CD4-positive, alpha-beta T cell (primary cell): ENCODE measurements at regions of chr12 and their contacts with region 1.

Region 1: DNA sequence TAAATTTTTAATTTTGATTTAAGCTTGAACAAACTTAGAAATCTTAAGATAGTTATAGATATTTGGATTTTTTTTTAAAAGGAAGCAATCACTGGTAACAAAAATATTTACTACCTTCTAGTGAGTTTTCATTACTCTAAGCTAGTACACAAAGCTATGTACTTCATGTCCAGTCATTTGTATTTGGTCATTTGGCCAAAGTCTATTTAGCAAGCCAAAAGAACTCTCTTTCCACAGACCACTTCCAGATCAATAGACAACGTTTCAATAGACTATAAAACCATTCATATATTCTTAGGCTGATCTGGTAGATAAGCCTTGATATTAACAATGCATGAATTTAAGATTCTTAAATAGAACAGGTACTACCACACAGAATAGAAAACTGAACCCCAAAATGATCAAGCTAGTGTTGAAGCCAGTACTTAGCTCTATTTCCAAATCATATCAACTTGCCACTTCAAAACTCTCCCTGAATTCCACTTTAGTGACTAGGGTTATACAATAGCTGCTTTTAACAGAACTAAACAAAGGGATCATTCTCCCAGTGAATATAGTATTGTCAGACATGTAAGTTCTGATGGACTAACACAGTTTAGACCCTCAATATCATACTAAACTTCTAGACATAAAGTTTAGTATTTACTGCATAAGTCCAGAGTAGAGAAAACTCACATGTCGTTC is 21.7 kb downstream of the CAPRIN2 start:
- DNase-seq: no peak
- ATAC-seq: no peak
- H3K4me3 ChIP-seq: no peak overlapping the region
- H3K4me3 Mint-ChIP-seq: no peak overlapping the region
- H3K27ac ChIP-seq: no peak overlapping the region
- H3K27ac Mint-ChIP-seq: no peak overlapping the region
- H3K4me1 ChIP-seq: no peaks in the 10 kb centered on the region
- H3K4me1 Mint-ChIP-seq: no peaks in the 10 kb centered on the region
- H3K27me3 ChIP-seq: no peaks in the 10 kb centered on the region
- H3K27me3 Mint-ChIP-seq: no peaks in the 10 kb centered on the region
- CTCF ChIP-seq: no peak

Region 2: DNA sequence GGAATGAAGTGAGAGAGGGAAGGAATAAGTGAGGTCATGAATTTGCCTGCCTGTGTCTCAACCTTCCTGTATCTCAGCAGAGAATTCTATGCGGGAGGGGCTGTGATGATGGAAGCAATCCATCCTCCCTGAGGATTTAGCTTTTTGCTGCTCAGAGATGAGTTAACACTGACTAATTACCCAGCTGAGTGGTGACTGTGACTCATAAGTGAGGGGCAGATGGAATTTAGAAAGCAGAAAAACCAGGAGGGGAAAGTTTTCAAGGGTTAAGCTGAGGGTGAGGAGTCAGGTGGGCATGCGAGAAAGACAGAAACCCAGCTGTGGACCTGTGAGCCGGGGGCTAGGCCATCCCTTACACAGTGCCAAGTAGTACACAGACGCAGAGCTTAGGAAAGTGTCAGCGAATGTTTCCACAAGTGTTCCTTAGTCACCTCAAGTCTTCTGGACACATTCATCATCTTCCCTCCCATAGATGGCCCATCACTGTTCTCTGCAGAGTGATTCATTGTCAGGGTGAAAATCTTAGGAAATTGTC is 315.3 kb before region 1 on chr12:
- CTCF ChIA-PET with region 1: no interaction called
- POLR2A ChIA-PET with region 1: no interaction called
- intact Hi-C with region 1: loop called in 1 of 2 experiments (anchors 10 kb)
- DNase-seq: no peak
- ATAC-seq: no peak
- H3K4me3 ChIP-seq: no peak overlapping the region
- H3K4me3 Mint-ChIP-seq: no peak overlapping the region
- H3K27ac ChIP-seq: no peak overlapping the region
- H3K27ac Mint-ChIP-seq: no peak overlapping the region
- H3K4me1 ChIP-seq: no peaks in the 10 kb centered on the region
- H3K4me1 Mint-ChIP-seq: no peaks in the 10 kb centered on the region
- H3K27me3 ChIP-seq: no peaks in the 10 kb centered on the region
- H3K27me3 Mint-ChIP-seq: no peaks in the 10 kb centered on the region
- CTCF ChIP-seq: no peak

Region 3: GRCh38 chr12:30746190-30746589 is 13.1 kb after region 1 on chr12:
- CTCF ChIA-PET with region 1: interaction called, 10 read pairs
- POLR2A ChIA-PET with region 1: no interaction called
- intact Hi-C with region 1: no loop called
- DNase-seq: no peak
- ATAC-seq: no peak
- H3K4me3 ChIP-seq: no peak overlapping the region
- H3K4me3 Mint-ChIP-seq: no peak overlapping the region
- H3K27ac ChIP-seq: no peak overlapping the region
- H3K27ac Mint-ChIP-seq: no peak overlapping the region
- H3K4me1 ChIP-seq: no peaks in the 10 kb centered on the region
- H3K4me1 Mint-ChIP-seq: peaks cover 30% of the 10 kb centered on the region
- H3K27me3 ChIP-seq: no peaks in the 10 kb centered on the region
- H3K27me3 Mint-ChIP-seq: no peaks in the 10 kb centered on the region
- CTCF ChIP-seq: no peak